IMR-90 (cell line): ENCODE measurements at regions of chr11 and their contacts with region 1.

Region 1: GRCh38 chr11:20110908-20111669 is 49.2 kb downstream of the DBX1 start:
- DNase-seq: peak; percentile 85
- ATAC-seq: peak; percentile 22
- H3K4me3 ChIP-seq: no peak overlapping the region
- H3K27ac ChIP-seq: peak overlapping the region; percentile 6; the same call in 1 of the 2 replicates
- H3K4me1 ChIP-seq: peaks cover 19% of the 10 kb centered on the region
- H3K27me3 ChIP-seq: no peaks in the 10 kb centered on the region
- CTCF ChIP-seq: peak; percentile 62
- POLR2A ChIP-seq: no peak
- RAD21 ChIP-seq: peak; percentile 57

Region 2: DNA sequence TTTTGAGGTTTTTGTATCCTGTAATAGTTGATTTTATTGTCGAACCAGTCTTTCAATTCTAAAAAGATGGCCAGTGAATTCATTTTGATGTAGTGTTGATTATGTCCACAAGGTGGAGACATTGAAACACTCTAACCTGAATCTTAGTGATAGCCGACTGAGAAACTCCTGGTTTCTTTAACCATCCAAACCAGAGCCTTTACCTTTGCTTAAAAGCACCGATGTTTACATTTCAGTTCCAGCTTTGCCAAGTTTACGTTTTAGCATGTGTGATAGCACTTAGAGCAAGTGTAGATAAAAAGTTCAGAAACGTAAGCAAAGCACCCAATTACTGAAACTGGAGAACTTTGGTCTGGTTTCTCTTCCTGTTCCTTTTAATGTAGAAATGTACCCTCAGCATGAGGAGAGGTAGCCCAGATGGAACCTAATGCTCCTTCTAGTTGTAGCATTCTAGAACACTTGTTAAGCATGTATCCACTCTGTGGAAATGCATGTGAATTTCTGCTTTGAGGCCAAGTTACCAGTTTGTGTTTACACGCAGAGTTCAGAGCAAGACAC is 159.5 kb before region 1 on chr11:
- CTCF ChIA-PET with region 1: interaction called, 4 read pairs
- POLR2A ChIA-PET with region 1: no interaction called
- dilution Hi-C with region 1: no loop called
- in situ Hi-C with region 1: no loop called
- intact Hi-C with region 1: loop called (anchors 1 kb)
- DNase-seq: peak; percentile 70
- ATAC-seq: peak; percentile 69
- H3K4me3 ChIP-seq: no peak overlapping the region; the same call in 1 of the 2 replicates
- H3K27ac ChIP-seq: no peak overlapping the region
- H3K4me1 ChIP-seq: peaks cover 15% of the 10 kb centered on the region
- H3K27me3 ChIP-seq: no peaks in the 10 kb centered on the region
- CTCF ChIP-seq: peak; percentile 73
- POLR2A ChIP-seq: no peak
- RAD21 ChIP-seq: peak; percentile 75

Region 3: GRCh38 chr11:20031155-20032109 is 79.7 kb before region 1 on chr11:
- CTCF ChIA-PET with region 1: interaction called, 4 read pairs
- POLR2A ChIA-PET with region 1: no interaction called
- dilution Hi-C with region 1: no loop called
- in situ Hi-C with region 1: no loop called
- intact Hi-C with region 1: loop called (anchors 2 kb)
- DNase-seq: peak; percentile 95
- ATAC-seq: peak; percentile 69
- H3K4me3 ChIP-seq: peak overlapping the region; percentile 31; the same call in 1 of the 2 replicates
- H3K27ac ChIP-seq: peak overlapping the region; percentile 88
- H3K4me1 ChIP-seq: peaks cover 27% of the 10 kb centered on the region
- H3K27me3 ChIP-seq: no peaks in the 10 kb centered on the region
- CTCF ChIP-seq: no peak
- POLR2A ChIP-seq: peak; percentile 33; the same call in 1 of the 2 replicates
- RAD21 ChIP-seq: no peak

Region 4: DNA sequence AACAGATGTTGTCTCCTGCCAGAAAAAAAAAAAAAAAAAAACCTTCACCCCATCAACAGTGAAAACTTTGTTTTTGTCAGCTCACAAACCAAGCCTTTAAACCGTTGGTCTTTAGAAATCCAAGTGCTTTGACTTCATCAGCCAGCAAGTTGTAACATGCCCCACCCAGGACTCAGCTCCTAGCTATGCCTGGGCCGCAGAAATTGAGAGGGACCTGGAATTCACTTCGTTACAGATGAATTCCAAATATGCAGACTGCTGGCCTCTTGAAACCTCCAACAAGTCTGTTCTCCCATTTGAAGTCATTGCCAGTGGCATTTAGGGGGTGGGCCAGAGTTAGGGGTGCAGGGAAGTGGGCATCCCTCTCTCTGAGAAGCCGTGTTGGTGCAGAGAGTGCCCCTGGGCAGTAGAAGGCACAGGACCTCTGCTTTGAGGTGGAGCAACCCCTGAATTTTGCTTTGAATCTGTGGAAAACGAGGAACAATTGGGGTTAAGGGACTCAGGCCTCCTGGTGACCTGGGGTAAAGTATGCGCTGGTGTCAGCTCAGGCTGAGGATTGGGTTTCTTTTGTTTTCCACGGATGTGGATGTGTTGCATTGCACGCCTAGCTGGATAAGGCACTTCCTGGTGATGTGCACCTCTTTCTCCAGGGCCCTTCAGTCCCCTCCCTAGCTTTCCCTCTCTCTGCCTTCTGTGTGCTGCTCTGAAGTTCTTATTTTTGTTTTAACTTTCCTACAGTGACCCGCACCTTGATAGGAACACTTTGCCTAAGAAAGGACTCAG is 60.3 kb before region 1 on chr11:
- CTCF ChIA-PET with region 1: no interaction called
- POLR2A ChIA-PET with region 1: interaction called, 17 read pairs
- dilution Hi-C with region 1: no loop called
- in situ Hi-C with region 1: no loop called
- intact Hi-C with region 1: no loop called
- DNase-seq: no peak
- ATAC-seq: peak; percentile 28
- H3K4me3 ChIP-seq: no peak overlapping the region
- H3K27ac ChIP-seq: no peak overlapping the region
- H3K4me1 ChIP-seq: peaks cover 13% of the 10 kb centered on the region
- H3K27me3 ChIP-seq: no peaks in the 10 kb centered on the region
- CTCF ChIP-seq: no peak
- POLR2A ChIP-seq: no peak
- RAD21 ChIP-seq: no peak

Region 5: DNA sequence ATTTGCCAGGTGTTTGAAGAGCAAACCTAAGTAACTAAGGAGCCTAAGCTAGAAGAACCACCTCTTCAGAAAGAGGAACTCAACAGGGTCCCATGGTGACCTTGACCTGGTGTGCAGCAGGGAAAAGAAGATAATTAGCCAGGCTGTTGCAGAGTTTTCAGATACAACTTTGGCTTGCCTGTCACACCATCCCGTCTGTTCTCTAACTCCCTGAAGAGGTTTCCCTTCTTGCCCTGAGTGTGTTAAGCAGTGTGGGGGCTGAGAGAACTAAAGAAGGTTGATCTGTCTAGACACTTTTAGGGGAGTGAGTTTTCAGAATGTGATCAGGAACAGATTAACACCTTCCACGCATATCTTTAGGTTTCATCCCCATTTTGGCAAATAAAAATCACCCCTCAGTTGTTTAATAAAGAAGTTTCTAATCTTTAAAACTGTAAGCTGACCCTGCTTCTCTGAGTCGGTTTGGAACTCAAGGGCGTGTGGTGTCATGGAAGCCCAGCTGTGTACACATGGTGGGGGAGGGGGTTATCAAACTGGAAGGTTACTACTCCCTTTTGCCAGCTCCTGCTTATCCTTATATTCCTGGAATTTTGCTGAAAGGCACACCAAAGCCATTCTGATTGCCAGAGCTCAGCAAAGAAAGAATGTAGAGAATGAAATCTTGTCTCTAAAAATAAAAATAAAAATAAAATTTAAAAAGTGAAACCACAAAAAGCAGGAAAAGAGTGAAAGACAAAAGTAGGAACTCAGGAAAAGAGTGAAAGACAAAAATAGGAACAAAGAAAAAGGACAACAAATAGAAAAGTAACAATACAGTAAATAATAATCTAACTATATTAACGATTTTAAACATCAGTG is 21.1 kb before region 1 on chr11:
- CTCF ChIA-PET with region 1: no interaction called
- POLR2A ChIA-PET with region 1: no interaction called
- dilution Hi-C with region 1: no loop called
- in situ Hi-C with region 1: no loop called
- intact Hi-C with region 1: no loop called
- DNase-seq: peak; percentile 71
- ATAC-seq: peak; percentile 65
- H3K4me3 ChIP-seq: no peak overlapping the region
- H3K27ac ChIP-seq: peak overlapping the region; percentile 13; the same call in 1 of the 2 replicates
- H3K4me1 ChIP-seq: peaks cover 9% of the 10 kb centered on the region
- H3K27me3 ChIP-seq: no peaks in the 10 kb centered on the region
- CTCF ChIP-seq: no peak
- POLR2A ChIP-seq: no peak
- RAD21 ChIP-seq: no peak

Region 6: DNA sequence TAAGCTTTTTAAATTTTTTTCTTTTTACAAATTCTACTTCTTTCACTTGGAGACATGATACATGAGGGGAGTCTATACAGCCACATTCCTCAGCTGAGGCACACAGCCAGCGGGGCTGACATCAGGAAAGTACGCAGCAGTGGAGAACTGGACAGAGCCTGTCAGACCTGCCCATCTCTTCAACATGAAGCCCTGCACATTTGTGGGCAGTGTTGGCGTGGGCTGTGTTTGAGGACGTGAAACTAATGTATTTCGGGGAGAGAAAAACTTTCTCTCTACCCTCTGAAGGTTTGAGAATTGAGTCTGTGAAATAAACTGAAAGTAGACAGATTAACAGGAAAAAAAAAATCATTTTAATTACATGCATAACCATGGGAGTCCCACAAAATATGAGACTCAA is 167.6 kb after region 1 on chr11:
- CTCF ChIA-PET with region 1: no interaction called
- POLR2A ChIA-PET with region 1: no interaction called
- dilution Hi-C with region 1: no loop called
- in situ Hi-C with region 1: no loop called
- intact Hi-C with region 1: no loop called
- DNase-seq: no peak
- ATAC-seq: no peak
- H3K4me3 ChIP-seq: no peak overlapping the region
- H3K27ac ChIP-seq: no peak overlapping the region
- H3K4me1 ChIP-seq: no peaks in the 10 kb centered on the region
- H3K27me3 ChIP-seq: peaks cover 8% of the 10 kb centered on the region
- CTCF ChIP-seq: no peak
- POLR2A ChIP-seq: no peak
- RAD21 ChIP-seq: no peak